ENCODE measurements at regions of chr2 and their contacts with region 1.

Region 1: DNA sequence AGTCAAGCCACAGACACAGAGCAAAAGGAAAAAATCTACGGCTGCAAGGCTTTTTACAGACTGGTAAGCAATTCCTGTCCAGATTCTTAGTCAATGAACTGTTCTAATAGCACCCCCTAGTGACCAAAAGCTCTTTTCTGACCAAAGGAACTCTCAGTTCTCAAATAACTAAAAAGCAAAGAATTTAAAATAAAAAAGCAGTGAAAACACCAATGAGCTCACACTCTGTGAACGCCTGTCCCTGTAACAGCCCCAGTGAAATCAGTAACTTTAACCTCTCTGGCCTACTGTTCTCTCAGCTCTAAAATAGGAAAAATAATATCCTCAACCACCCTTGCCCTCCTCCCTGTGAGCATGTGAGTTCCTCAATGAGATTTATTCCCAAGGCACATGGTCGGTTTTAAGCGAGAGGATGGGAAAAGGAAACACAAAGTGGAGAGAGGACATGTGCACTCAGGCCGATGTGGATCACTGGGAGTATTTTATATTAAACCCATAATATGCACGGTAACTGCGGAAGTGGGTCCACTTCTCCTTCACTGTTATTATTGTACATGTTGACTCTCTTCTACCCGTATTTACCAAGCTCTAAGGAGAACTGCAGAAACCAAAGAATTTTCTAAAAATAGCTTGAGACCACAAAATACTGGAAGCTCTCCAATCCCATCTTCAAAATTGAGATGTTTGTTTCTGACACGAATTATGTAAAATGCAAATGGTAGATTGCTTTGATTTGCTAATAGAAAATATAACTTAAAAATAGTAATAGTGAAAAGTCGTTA is 128.5 kb downstream of the STK39 start:
- DNase-seq: peak; percentile 82
- ATAC-seq: peak; percentile 89
- H3K4me3 ChIP-seq: no peak overlapping the region
- H3K27ac ChIP-seq: peak overlapping the region; percentile 61; the same call in 1 of the 2 replicates
- H3K4me1 ChIP-seq: peaks cover 4% of the 10 kb centered on the region
- H3K27me3 ChIP-seq: no peaks in the 10 kb centered on the region
- CTCF ChIP-seq: peak; percentile 77
- POLR2A ChIP-seq: no peak
- RAD21 ChIP-seq: peak; percentile 76

Region 2: GRCh38 chr2:166700079-166700478 is 1418.8 kb before region 1 on chr2:
- CTCF ChIA-PET with region 1: no interaction called
- POLR2A ChIA-PET with region 1: no interaction called
- dilution Hi-C with region 1: no loop called
- in situ Hi-C with region 1: no loop called
- intact Hi-C with region 1: loop called (anchors 2 kb)
- DNase-seq: peak; percentile 52
- ATAC-seq: peak; percentile 62; the same call in 1 of the 2 replicates
- H3K4me3 ChIP-seq: no peak overlapping the region
- H3K27ac ChIP-seq: no peak overlapping the region
- H3K4me1 ChIP-seq: no peaks in the 10 kb centered on the region
- H3K27me3 ChIP-seq: no peaks in the 10 kb centered on the region
- CTCF ChIP-seq: peak; percentile 75
- POLR2A ChIP-seq: no peak
- RAD21 ChIP-seq: peak; percentile 82

Region 3: DNA sequence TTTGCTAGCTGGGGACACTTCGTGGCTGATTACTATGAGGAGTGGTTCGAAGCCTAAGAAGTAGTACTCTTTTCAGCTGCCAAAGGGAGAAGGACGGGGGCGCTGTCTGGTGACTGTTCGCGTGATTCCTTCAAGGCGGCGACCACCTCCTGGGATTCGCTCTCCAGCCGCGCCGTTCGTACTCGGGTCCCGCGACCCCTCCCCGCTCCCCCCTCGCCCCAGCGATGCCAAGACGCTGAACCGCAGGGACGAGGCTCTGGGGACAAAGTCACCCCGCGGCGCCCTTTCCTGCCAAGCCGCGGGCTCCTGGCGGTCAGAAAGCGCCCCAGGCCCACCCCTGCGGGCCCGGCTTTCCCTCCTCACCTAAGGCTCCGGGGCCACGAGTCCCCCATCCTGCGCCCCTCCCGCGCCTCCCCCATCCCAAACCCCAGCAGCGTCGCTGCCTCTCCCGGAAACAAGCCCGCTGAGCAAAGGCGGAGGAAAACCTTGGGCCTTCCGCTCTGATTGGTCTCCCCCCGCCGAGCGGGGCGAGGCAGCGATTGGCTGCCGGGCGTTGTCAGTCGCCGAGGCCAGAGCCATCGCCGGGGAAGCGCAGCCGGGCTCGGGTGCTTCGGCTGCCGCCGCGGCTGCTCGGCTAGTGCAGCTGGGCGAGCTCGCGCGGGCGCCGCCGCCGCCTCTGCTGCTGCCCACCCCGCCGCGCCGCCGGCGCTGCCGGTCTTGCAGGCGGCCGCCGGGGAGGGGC is 826.3 kb before region 1 on chr2:
- CTCF ChIA-PET with region 1: interaction called, 3 read pairs
- POLR2A ChIA-PET with region 1: no interaction called
- dilution Hi-C with region 1: no loop called
- in situ Hi-C with region 1: loop called (anchors 25 kb)
- intact Hi-C with region 1: loop called (anchors 5 kb)
- DNase-seq: peak; percentile 93
- ATAC-seq: peak; percentile 98
- H3K4me3 ChIP-seq: peak within 1 kb of the TSS; percentile 68
- H3K27ac ChIP-seq: peak within 1 kb of the TSS; percentile 67
- H3K4me1 ChIP-seq: no peaks in the 10 kb centered on the region; the same call in 1 of the 2 replicates
- H3K27me3 ChIP-seq: no peaks in the 10 kb centered on the region
- CTCF ChIP-seq: peak; percentile 34
- POLR2A ChIP-seq: no peak
- RAD21 ChIP-seq: no peak; the same call in 1 of the 2 replicates

Region 4: DNA sequence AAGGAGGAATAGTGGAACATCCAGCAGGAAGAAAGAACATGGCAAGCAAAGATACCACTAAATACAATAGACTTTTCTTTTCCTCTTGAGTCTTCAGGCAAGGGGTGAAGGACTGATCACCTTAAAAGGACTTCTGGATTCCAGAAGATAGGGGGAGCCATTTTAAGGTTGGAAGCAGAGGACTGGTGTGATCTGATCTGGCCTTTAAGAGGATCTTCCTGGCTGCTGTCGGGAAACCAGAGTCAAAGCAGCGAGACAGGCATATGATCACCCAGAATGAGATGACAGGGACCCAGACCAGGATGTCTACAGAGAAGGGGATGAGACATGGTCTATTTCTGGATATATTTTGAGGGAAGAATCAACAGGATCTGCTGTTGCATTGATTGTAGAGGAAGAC is 429.5 kb before region 1 on chr2:
- CTCF ChIA-PET with region 1: no interaction called
- POLR2A ChIA-PET with region 1: no interaction called
- dilution Hi-C with region 1: no loop called
- in situ Hi-C with region 1: loop called (anchors 25 kb)
- intact Hi-C with region 1: no loop called
- DNase-seq: no peak
- ATAC-seq: no peak
- H3K4me3 ChIP-seq: no peak overlapping the region
- H3K27ac ChIP-seq: no peak overlapping the region
- H3K4me1 ChIP-seq: no peaks in the 10 kb centered on the region
- H3K27me3 ChIP-seq: no peaks in the 10 kb centered on the region
- CTCF ChIP-seq: no peak
- POLR2A ChIP-seq: no peak
- RAD21 ChIP-seq: no peak

Region 5: GRCh38 chr2:167944825-167945659 is 173.9 kb before region 1 on chr2:
- CTCF ChIA-PET with region 1: interaction called, 10 read pairs
- POLR2A ChIA-PET with region 1: no interaction called
- dilution Hi-C with region 1: no loop called
- in situ Hi-C with region 1: no loop called
- intact Hi-C with region 1: no loop called
- DNase-seq: peak; percentile 47
- ATAC-seq: peak; percentile 44; the same call in 1 of the 2 replicates
- H3K4me3 ChIP-seq: no peak overlapping the region
- H3K27ac ChIP-seq: no peak overlapping the region
- H3K4me1 ChIP-seq: no peaks in the 10 kb centered on the region
- H3K27me3 ChIP-seq: no peaks in the 10 kb centered on the region
- CTCF ChIP-seq: no peak
- POLR2A ChIP-seq: no peak
- RAD21 ChIP-seq: no peak

Region 6: DNA sequence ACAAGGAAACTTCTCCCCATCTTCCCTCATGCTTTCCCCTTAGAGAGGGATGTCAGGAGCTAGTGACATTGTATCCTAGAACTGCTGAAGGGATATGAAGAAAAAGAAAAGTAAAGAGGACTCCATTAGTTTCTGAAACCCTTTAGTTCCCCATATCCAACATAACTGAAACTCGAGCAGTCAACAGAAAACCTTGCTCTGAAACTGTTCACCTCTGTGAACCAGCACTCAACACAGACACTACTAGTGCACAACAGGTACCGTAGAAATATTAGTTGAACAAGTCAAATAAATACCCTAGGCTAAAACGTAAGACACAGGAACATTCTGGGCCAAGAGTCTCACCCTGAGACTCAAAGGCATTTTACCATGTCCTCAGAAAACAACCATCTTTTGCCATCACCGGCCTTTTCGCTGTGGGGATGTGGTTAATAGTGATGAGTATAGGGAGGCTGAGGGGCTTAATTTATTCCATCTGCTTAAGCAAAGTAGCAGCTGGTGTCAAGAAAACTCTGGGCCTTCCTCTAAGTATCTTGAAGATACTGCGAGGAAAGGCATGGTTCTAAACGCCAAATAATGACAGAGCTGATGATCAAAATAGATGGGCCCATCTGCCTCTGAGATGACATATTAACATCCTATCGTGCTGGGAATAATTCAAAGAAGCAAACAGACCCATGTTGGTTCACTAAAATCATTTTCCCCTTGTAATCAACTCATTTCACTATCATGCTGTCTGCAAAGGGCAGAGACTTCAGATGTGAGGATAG is 28.4 kb before region 1 on chr2:
- CTCF ChIA-PET with region 1: interaction called, 13 read pairs
- POLR2A ChIA-PET with region 1: no interaction called
- dilution Hi-C with region 1: no loop called
- in situ Hi-C with region 1: no loop called
- intact Hi-C with region 1: no loop called
- DNase-seq: no peak
- ATAC-seq: no peak
- H3K4me3 ChIP-seq: no peak overlapping the region
- H3K27ac ChIP-seq: no peak overlapping the region
- H3K4me1 ChIP-seq: peaks cover 3% of the 10 kb centered on the region; the same call in 1 of the 2 replicates
- H3K27me3 ChIP-seq: no peaks in the 10 kb centered on the region
- CTCF ChIP-seq: no peak
- POLR2A ChIP-seq: no peak
- RAD21 ChIP-seq: no peak